ENCODE measurements at regions of chr10 and their contacts with region 1.

Region 1: DNA sequence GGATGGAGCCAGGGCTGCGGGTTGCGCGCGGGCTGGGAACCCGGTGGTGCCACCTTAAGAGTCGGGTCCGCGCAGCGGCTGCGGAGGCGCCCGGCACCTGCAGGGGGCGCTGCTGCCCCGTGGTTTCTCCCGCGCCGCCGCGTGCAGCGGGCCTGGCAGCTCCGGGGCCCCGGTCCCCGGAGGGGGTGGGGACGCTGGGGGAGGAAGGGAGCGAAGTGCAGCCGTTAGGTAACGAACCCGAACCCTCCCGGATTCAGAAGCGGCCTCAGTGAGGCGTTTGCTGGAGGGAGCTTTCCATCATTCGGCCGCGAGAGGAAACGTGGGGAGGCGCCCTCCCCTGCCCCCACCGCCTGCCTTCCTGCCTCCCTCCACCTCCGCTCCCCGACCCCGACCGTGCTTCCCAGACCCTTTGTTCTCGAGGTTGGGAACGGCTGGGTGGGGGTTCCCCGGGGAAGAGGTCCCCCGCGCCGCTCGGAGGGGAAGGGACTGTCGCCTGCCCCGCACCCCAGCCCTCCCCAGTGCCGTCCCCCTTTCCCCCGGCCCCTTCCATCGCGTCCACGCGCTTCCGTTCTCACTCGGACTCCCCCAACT is 29.6 kb downstream of the SKIDA1 start:
- DNase-seq: peak; percentile 94
- H3K4me3 Mint-ChIP-seq: peak overlapping the region; percentile 78
- H3K27ac Mint-ChIP-seq: no peak overlapping the region
- H3K4me1 Mint-ChIP-seq: no peaks in the 10 kb centered on the region
- H3K27me3 Mint-ChIP-seq: peaks cover 24% of the 10 kb centered on the region
- CTCF ChIP-seq: peak; percentile 92

Region 2: DNA sequence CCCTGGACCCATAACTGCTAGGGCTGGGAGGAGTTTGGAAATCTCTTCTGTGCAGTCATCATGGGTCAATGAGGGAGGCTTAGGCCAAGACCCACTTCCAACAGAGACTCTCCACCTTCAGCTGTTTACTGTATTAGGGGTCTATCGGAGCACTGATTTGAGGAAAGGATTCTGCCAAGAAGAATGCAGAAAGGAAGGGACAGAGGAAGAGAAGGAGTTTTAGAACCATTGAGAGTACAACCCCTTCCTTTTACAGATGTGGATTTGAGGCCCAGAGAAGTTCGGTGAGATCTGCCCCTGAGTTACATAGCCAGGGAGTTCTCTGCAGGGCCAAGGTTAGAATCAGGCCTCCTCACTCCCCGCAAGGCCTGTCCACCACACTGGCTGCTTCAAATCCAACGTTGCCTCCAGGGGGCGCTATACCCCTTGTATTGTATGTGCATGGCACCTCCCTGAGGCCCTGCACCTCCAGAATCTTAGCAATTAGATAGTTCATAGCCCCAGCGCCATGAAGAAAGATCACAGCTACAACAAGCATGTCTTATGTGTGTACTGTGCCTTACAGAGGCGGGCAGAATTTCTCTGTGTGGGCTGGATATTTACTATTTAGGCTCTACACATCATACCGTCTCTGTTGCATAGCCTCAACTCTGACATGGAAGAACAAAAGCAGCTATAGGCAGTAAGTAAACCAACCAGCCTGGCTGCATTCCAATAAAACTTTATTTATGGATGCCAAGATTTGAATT is 217.2 kb before region 1 on chr10:
- CTCF ChIA-PET with region 1: interaction called, 9 read pairs
- intact Hi-C with region 1: loop called (anchors 2 kb)
- DNase-seq: peak; percentile 94
- H3K4me3 Mint-ChIP-seq: no peak overlapping the region
- H3K27ac Mint-ChIP-seq: no peak overlapping the region
- H3K4me1 Mint-ChIP-seq: peaks cover 28% of the 10 kb centered on the region
- H3K27me3 Mint-ChIP-seq: no peaks in the 10 kb centered on the region
- CTCF ChIP-seq: peak; percentile 93

Region 3: GRCh38 chr10:21473135-21473534 is 22.7 kb before region 1 on chr10:
- CTCF ChIA-PET with region 1: no interaction called
- intact Hi-C with region 1: no loop called
- DNase-seq: no peak
- H3K4me3 Mint-ChIP-seq: no peak overlapping the region
- H3K27ac Mint-ChIP-seq: no peak overlapping the region
- H3K4me1 Mint-ChIP-seq: no peaks in the 10 kb centered on the region
- H3K27me3 Mint-ChIP-seq: no peaks in the 10 kb centered on the region
- CTCF ChIP-seq: no peak

Region 4: GRCh38 chr10:21533467-21534279 is 37.8 kb after region 1 on chr10 and contains the start of gene MLLT10:
- CTCF ChIA-PET with region 1: interaction called, 3 read pairs
- intact Hi-C with region 1: loop called (anchors 2 kb)
- DNase-seq: peak; percentile 97
- H3K4me3 Mint-ChIP-seq: peak within 1 kb of the TSS; percentile 87
- H3K27ac Mint-ChIP-seq: peak within 1 kb of the TSS; percentile 93
- H3K4me1 Mint-ChIP-seq: no peaks in the 10 kb centered on the region
- H3K27me3 Mint-ChIP-seq: no peaks in the 10 kb centered on the region
- CTCF ChIP-seq: no peak
- total RNA-seq, gene MLLT10: 32.1 and 34.7 TPM in 2 replicates

Region 5: GRCh38 chr10:21926949-21927348 is 431.1 kb after region 1 on chr10:
- CTCF ChIA-PET with region 1: interaction called, 10 read pairs
- intact Hi-C with region 1: no loop called
- DNase-seq: peak; percentile 61
- H3K4me3 Mint-ChIP-seq: no peak overlapping the region
- H3K27ac Mint-ChIP-seq: peak overlapping the region; percentile 29
- H3K4me1 Mint-ChIP-seq: peaks cover 17% of the 10 kb centered on the region
- H3K27me3 Mint-ChIP-seq: no peaks in the 10 kb centered on the region
- CTCF ChIP-seq: no peak

Measured in Calu3 (cell line).